IMR-90 (cell line): ENCODE measurements at regions of chr19 and their contacts with region 1.

Region 1: GRCh38 chr19:13511947-13512346 is 5.7 kb upstream of the CACNA1A start:
- DNase-seq: no peak
- ATAC-seq: no peak
- H3K4me3 ChIP-seq: no peak overlapping the region
- H3K27ac ChIP-seq: no peak overlapping the region
- H3K4me1 ChIP-seq: peaks cover 3% of the 10 kb centered on the region; the same call in 1 of the 2 replicates
- H3K27me3 ChIP-seq: peaks cover 34% of the 10 kb centered on the region
- CTCF ChIP-seq: no peak
- POLR2A ChIP-seq: no peak
- RAD21 ChIP-seq: no peak

Region 2: GRCh38 chr19:13002166-13002898 is 509.6 kb before region 1 on chr19:
- CTCF ChIA-PET with region 1: no interaction called
- POLR2A ChIA-PET with region 1: no interaction called
- dilution Hi-C with region 1: no loop called
- in situ Hi-C with region 1: no loop called
- intact Hi-C with region 1: no loop called
- DNase-seq: no peak
- ATAC-seq: peak; percentile 64
- H3K4me3 ChIP-seq: no peak overlapping the region
- H3K27ac ChIP-seq: peak overlapping the region; percentile 48; the same call in 1 of the 2 replicates
- H3K4me1 ChIP-seq: peaks cover 15% of the 10 kb centered on the region; the same call in 1 of the 2 replicates
- H3K27me3 ChIP-seq: no peaks in the 10 kb centered on the region
- CTCF ChIP-seq: no peak
- POLR2A ChIP-seq: no peak
- RAD21 ChIP-seq: no peak

Region 3: DNA sequence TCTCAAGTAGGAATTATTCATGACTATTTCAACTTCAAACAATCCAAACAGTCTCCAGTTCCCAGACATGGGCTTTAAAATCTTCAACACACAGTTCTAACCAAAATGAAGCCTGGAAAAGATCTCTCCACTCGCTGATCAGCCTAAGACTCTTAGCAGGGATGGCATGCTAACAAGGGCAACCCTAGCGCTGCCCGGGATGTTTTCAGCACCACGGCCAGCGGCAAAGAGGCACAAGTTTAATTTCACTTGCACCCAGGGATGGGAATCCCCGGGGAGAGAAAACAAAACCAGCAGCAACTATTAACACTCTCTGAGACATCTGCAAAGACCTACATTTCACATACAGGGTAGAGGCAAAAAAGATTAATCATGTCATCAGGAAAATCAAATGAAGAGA is 48.7 kb before region 1 on chr19:
- CTCF ChIA-PET with region 1: no interaction called
- POLR2A ChIA-PET with region 1: no interaction called
- dilution Hi-C with region 1: no loop called
- in situ Hi-C with region 1: no loop called
- intact Hi-C with region 1: loop called (anchors 10 kb)
- DNase-seq: peak; percentile 15
- ATAC-seq: peak; percentile 56
- H3K4me3 ChIP-seq: no peak overlapping the region
- H3K27ac ChIP-seq: no peak overlapping the region
- H3K4me1 ChIP-seq: no peaks in the 10 kb centered on the region
- H3K27me3 ChIP-seq: no peaks in the 10 kb centered on the region
- CTCF ChIP-seq: no peak
- POLR2A ChIP-seq: no peak
- RAD21 ChIP-seq: no peak